Activated CD4-positive, alpha-beta T cell treated with anti-CD3 and anti-CD28 coated beads, Interleukin-2, amount 10 ng/mL, durations not matched to agents 24 days and 14 days (primary cell): ENCODE measurements at regions of chr7 and their contacts with region 1.

Region 1: DNA sequence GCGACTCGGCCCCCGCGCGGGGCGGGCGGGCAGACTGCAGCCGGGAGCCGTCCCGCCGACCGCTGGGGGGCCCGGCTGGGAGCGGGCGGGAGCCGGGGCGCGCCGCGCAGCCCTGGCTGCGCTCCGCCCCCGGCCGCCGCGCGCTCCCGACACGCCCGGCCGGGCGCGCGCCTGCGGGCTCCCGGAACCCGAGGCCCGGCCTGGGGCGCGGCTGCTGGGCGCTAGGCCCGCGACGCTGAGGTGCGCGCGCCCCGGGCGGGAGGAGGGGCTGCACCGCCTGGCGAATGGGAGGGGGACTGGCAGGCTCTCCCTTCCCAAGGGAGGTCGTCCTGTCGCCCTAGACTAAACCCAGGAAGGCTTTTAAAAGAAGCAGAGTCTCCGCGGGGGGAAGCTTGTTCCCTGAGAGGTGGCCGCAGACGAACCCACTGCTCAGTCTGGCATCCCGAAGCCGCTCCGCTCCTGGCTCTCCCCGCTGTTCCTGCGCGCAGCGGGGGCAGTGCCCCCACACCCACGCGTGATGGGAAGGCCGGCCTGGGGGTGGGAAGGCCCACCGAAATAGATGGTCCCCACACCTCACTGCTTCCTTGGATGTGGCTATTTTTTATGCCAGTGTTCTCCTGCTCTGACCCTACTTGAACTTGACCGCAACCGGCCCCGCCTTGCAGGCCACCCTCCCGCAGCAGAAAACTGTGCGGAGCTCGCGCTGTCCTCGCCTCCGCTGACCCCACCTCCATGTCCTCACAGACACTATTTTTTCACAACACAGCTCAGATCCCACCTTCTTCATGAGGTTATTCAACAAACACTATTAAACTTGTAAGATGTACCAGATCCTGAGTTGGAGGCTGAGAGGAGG is at the start of gene VOPP1:
- DNase-seq: peak; percentile 91
- H3K4me3 Mint-ChIP-seq: peak within 1 kb of the TSS; percentile 91
- H3K27ac Mint-ChIP-seq: peak within 1 kb of the TSS; percentile 93
- H3K4me1 Mint-ChIP-seq: peaks cover 64% of the 10 kb centered on the region
- H3K27me3 Mint-ChIP-seq: no peaks in the 10 kb centered on the region
- total RNA-seq, gene VOPP1: 87.4 and 90.6 TPM in 2 replicates

Region 2: GRCh38 chr7:55309040-55309991 is 263.3 kb before region 1 on chr7:
- intact Hi-C with region 1: loop called (anchors 2 kb)
- DNase-seq: peak; percentile 82
- H3K4me3 Mint-ChIP-seq: peak overlapping the region; percentile 41
- H3K27ac Mint-ChIP-seq: peak overlapping the region; percentile 87
- H3K4me1 Mint-ChIP-seq: peaks cover 27% of the 10 kb centered on the region
- H3K27me3 Mint-ChIP-seq: peaks cover 4% of the 10 kb centered on the region

Region 3: DNA sequence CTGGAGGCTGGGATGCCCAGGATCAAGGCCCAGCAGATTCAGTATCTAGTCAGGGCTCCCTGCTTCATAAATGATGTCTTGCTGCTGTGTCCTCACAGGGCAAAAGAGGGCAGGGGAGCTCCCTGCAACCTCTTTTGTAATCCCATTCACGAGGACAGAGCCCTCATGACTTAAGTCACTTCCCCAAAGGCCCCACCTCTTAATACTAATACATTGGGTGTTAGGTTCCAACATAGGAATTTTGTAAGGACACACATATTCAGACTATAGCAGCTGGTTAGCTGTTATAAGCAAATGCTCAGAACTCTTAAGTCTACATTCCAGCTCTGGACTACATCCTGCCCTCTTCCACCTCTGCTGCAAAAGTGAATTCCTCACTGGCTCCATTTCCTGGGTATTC is 63.3 kb before region 1 on chr7:
- intact Hi-C with region 1: loop called (anchors 2 kb)
- DNase-seq: no peak
- H3K4me3 Mint-ChIP-seq: no peak overlapping the region
- H3K27ac Mint-ChIP-seq: peak overlapping the region; percentile 67
- H3K4me1 Mint-ChIP-seq: peaks cover 51% of the 10 kb centered on the region
- H3K27me3 Mint-ChIP-seq: no peaks in the 10 kb centered on the region

Region 4: GRCh38 chr7:55534175-55534915 is 38.3 kb before region 1 on chr7:
- intact Hi-C with region 1: loop called (anchors 1 kb)
- DNase-seq: peak; percentile 93
- H3K4me3 Mint-ChIP-seq: peak overlapping the region; percentile 70
- H3K27ac Mint-ChIP-seq: peak overlapping the region; percentile 99
- H3K4me1 Mint-ChIP-seq: peaks cover 87% of the 10 kb centered on the region
- H3K27me3 Mint-ChIP-seq: peaks cover 2% of the 10 kb centered on the region

Region 5: DNA sequence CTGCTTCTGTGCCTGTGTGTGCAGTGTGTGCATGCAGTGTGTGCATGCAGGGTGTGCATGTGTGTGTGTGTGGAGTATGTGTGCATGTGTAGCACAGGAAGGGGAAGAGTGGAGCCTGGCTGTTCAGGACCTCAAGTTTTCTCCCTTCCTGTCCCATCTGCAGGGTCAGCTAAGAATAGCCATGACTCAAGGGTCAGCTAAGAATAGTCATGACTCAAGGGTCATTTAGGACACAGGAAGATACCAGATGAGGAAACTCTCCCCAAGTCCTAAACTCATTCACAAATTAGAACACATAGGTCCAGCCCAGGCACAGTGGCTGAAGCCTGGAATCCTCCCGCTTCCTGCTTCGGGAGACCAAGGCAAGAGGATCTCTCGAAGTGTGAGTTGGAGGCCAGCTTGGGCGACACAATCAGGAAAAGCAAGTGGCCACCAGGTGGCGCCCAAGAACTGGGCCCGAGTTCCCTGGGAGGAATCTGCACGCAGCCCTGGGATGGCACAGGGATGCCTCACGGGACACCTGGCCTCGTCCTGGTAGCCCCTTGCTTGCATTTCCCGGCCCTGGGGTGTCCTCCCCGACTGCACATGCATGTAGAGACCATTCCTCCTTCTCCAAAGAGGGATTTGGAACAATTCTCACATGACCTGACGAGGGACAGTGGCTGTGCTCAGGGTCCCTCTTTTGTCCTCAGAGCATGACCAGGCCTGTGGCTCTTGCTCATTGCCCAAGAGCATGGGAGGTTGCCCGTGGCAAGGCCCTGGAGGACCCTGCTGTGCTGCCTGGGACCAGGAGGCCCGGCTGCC is 21.1 kb after region 1 on chr7:
- intact Hi-C with region 1: loop called (anchors 2 kb)
- DNase-seq: peak; percentile 91
- H3K4me3 Mint-ChIP-seq: no peak overlapping the region
- H3K27ac Mint-ChIP-seq: no peak overlapping the region
- H3K4me1 Mint-ChIP-seq: peaks cover 22% of the 10 kb centered on the region
- H3K27me3 Mint-ChIP-seq: peaks cover 4% of the 10 kb centered on the region

Region 6: DNA sequence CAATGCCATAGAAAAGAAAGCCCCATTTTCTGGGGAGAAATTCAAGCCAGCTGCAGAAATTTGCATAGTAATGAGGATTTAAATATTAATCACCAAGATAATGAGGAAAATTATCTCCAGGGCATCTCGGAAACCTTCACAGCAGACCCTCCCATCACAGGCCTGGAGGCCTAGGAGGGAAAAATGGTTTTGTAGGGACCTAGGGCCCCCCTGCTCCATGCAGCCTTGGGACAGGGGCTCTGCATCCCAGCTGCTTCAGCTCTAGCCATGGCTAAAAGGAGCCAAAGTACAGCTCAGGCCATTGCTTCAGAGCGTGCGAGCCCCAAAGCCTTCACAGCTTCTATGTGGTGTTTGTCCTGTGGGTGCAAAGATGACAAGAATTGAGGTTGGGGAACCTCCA is 46.3 kb after region 1 on chr7:
- intact Hi-C with region 1: no loop called
- DNase-seq: no peak
- H3K4me3 Mint-ChIP-seq: no peak overlapping the region
- H3K27ac Mint-ChIP-seq: no peak overlapping the region
- H3K4me1 Mint-ChIP-seq: no peaks in the 10 kb centered on the region
- H3K27me3 Mint-ChIP-seq: peaks cover 4% of the 10 kb centered on the region

Region 7: GRCh38 chr7:56051339-56052191 is 479.0 kb after region 1 on chr7 and contains the starts of genes CCT6A and PSPH:
- intact Hi-C with region 1: loop called (anchors 5 kb)
- DNase-seq: peak; percentile 98
- H3K4me3 Mint-ChIP-seq: peak within 1 kb of the TSS; percentile 100
- H3K27ac Mint-ChIP-seq: peak within 1 kb of the TSS; percentile 98
- H3K4me1 Mint-ChIP-seq: peaks cover 29% of the 10 kb centered on the region
- H3K27me3 Mint-ChIP-seq: no peaks in the 10 kb centered on the region
- total RNA-seq, gene CCT6A: 339 and 342 TPM in 2 replicates
- total RNA-seq, gene PSPH: 23.8 and 25.8 TPM in 2 replicates